Common myeloid progenitor, CD34-positive (primary cell): ENCODE measurements at regions of chr2 and their contacts with region 1.

Region 1: DNA sequence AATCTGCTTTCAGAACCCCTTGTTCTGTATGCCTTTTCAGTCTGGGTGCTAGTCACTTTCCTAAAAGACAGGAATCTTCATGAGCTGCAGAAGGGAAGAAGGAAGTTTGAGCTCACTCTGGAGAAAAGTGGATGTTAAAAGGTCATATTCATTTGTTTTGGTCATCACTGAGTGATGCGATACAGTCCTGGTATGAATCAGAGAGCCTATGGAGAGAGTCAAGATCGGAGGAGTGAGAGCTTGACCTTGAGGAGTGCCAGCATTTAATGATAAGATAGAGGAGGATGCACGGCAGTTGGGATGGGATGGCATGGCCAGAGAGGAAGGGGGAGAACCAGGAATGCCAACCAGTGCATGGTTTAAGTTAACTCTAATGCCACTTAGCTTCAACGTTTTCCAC is 19.6 kb downstream of the USP39 start:
- DNase-seq: no peak
- H3K4me3 ChIP-seq: no peak overlapping the region
- H3K27ac ChIP-seq: peak overlapping the region in 1 of 2 experiments; percentile 29
- H3K4me1 ChIP-seq: no peaks in the 10 kb centered on the region
- H3K27me3 ChIP-seq: no peaks in the 10 kb centered on the region

Region 2: GRCh38 chr2:85619617-85620016 is 16.0 kb before region 1 on chr2:
- CTCF ChIA-PET with region 1: interaction called, 38 read pairs
- POLR2A ChIA-PET with region 1: no interaction called
- DNase-seq: no peak
- H3K4me3 ChIP-seq: no peak overlapping the region
- H3K27ac ChIP-seq: no peak overlapping the region
- H3K4me1 ChIP-seq: peaks cover 6 to 16% (median 11%) of the 10 kb centered on the region in 4 experiments
- H3K27me3 ChIP-seq: no peaks in the 10 kb centered on the region

Region 3: GRCh38 chr2:85648619-85649018 is 13.0 kb after region 1 on chr2:
- CTCF ChIA-PET with region 1: interaction called, 69 read pairs
- POLR2A ChIA-PET with region 1: no interaction called
- DNase-seq: peak; percentile 34 to 61 (median 57)
- H3K4me3 ChIP-seq: no peak overlapping the region
- H3K27ac ChIP-seq: no peak overlapping the region
- H3K4me1 ChIP-seq: no peaks in the 10 kb centered on the region
- H3K27me3 ChIP-seq: no peaks in the 10 kb centered on the region

Region 4: GRCh38 chr2:85655961-85656417 is 20.4 kb after region 1 on chr2:
- CTCF ChIA-PET with region 1: interaction called, 23 read pairs
- POLR2A ChIA-PET with region 1: no interaction called
- DNase-seq: no peak
- H3K4me3 ChIP-seq: no peak overlapping the region
- H3K27ac ChIP-seq: no peak overlapping the region
- H3K4me1 ChIP-seq: peaks cover 0 to 5% (median 4%) of the 10 kb centered on the region in 4 experiments
- H3K27me3 ChIP-seq: no peaks in the 10 kb centered on the region

Region 5: GRCh38 chr2:85707304-85707703 is 71.7 kb after region 1 on chr2:
- CTCF ChIA-PET with region 1: interaction called, 32 read pairs
- POLR2A ChIA-PET with region 1: interaction called, 4 read pairs
- DNase-seq: peak; percentile 91 to 95 (median 93)
- H3K4me3 ChIP-seq: no peak overlapping the region
- H3K27ac ChIP-seq: no peak overlapping the region
- H3K4me1 ChIP-seq: peaks cover 19 to 72% (median 55%) of the 10 kb centered on the region in 4 experiments
- H3K27me3 ChIP-seq: no peaks in the 10 kb centered on the region